A673 (cell line): ENCODE measurements at regions of chr6 and their contacts with region 1.

Region 1: DNA sequence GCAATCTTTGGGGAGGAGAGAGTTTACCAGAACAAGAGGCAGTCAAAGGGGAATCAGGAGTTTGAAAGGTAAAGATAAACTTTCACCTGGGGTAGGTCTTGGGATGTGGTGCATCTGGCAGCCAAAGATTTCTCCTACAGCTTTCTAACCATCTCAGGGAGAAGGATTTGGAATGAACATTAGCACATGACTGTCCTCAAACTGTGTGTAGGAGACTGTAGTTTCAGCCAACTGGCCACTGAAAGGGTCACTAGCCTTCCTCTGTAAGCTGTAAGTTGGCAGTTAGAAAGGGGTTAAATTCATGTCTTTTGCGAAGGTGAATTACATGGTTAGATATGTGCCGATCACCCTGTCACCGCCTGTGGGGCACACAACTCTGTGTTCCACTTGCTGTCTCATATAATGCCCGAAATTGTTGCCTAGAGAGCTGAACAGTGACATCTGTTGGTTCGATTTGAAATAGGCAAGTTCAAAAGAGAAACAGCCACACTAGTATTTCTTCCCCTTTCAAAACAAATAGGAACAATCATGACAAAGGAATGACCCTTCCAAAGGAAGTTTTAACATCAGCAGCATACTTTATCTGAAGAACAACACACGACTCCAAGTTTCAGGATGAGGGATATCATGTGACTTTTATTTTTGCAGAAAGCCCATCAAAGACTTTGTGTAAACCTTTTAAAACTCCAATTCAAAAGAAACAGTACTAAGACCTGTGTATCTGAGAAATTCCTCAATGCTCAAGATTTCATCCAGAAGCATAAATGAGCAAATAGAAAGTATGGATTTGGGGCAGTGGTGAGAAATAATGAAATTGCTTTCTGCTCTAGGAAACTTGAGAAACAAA is 1.1 kb upstream of the OPN5 start:
- DNase-seq: peak; percentile 68
- H3K4me3 ChIP-seq: no peak overlapping the region
- H3K27ac ChIP-seq: no peak overlapping the region
- H3K4me1 ChIP-seq: no peaks in the 10 kb centered on the region
- H3K27me3 ChIP-seq: peaks cover 9% of the 10 kb centered on the region
- CTCF ChIP-seq: peak; percentile 74

Region 2: GRCh38 chr6:47631269-47631772 is 149.4 kb before region 1 on chr6:
- CTCF ChIA-PET with region 1: interaction called, 29 read pairs
- POLR2A ChIA-PET with region 1: no interaction called
- intact Hi-C with region 1: loop called (anchors 1 kb)
- DNase-seq: peak; percentile 77
- H3K4me3 ChIP-seq: no peak overlapping the region
- H3K27ac ChIP-seq: no peak overlapping the region
- H3K4me1 ChIP-seq: peaks cover 14% of the 10 kb centered on the region
- H3K27me3 ChIP-seq: no peaks in the 10 kb centered on the region
- CTCF ChIP-seq: peak; percentile 66

Region 3: GRCh38 chr6:47733879-47734558 is 46.7 kb before region 1 on chr6:
- CTCF ChIA-PET with region 1: no interaction called
- POLR2A ChIA-PET with region 1: no interaction called
- intact Hi-C with region 1: no loop called
- DNase-seq: peak; percentile 35
- H3K4me3 ChIP-seq: no peak overlapping the region
- H3K27ac ChIP-seq: no peak overlapping the region
- H3K4me1 ChIP-seq: no peaks in the 10 kb centered on the region
- H3K27me3 ChIP-seq: no peaks in the 10 kb centered on the region
- CTCF ChIP-seq: peak; percentile 61

Region 4: DNA sequence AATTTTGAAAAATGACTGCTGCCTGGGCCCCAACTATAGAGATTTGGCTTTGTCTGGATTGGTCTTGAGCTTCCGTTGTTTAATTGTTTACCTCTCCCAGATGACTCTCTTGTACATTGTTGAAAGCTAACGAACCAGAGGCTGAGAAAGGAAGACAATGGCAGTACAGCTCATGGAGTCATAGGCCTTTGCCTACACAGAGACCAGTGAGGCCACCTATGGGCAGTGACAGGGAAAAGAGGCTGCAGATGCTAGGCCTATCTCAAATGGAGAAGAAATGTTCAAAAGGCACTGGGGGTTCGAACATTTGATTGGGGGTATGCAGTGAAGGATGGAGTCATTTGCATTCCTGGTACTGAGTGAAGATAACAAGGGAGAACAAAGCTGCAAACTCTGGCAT is 30.2 kb after region 1 on chr6:
- CTCF ChIA-PET with region 1: no interaction called
- POLR2A ChIA-PET with region 1: no interaction called
- intact Hi-C with region 1: no loop called
- DNase-seq: no peak
- H3K4me3 ChIP-seq: no peak overlapping the region
- H3K27ac ChIP-seq: no peak overlapping the region
- H3K4me1 ChIP-seq: no peaks in the 10 kb centered on the region
- H3K27me3 ChIP-seq: peaks cover 9% of the 10 kb centered on the region
- CTCF ChIP-seq: peak; percentile 34; the same call in 1 of the 2 replicates

Region 5: DNA sequence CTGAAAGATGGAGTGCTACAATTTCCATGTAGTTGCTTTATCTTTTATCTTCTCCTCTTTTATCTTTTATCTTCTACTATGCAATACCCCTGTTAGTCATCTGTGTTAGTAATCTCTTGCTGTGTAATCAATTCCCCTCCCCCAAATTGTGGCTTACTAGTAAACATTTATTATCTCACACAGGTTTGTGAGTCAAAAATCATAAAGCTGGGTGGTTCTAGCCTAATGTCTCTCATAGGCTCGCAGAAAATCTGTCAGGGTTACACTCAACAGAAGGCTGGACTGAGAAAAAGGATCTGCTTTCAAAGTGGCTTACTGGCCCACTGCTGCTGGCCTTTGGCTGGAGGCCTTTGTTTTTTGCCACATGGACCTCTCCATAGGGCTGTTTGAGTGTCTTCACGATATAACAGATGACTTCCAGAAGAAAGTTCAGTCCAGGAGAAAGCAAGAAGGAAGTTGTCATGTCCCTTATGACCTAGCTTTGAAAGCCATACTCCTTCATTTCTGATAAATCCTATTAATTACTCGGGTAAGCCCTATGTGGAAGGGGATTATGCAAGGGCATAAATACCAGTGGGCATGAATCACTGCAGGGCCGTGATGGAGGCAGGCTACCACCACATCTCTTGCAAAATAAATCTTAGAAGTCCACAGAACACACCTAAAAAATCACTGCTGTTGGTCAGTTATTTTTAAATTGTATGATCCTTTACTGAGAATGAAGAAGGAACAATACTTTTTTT is 354.8 kb after region 1 on chr6:
- CTCF ChIA-PET with region 1: interaction called, 14 read pairs
- POLR2A ChIA-PET with region 1: no interaction called
- intact Hi-C with region 1: no loop called
- DNase-seq: peak; percentile 9
- H3K4me3 ChIP-seq: no peak overlapping the region
- H3K27ac ChIP-seq: no peak overlapping the region
- H3K4me1 ChIP-seq: no peaks in the 10 kb centered on the region
- H3K27me3 ChIP-seq: no peaks in the 10 kb centered on the region
- CTCF ChIP-seq: no peak